Posterior vena cava (tissue), 2 donors: ENCODE measurements at regions of chr7 and their contacts with region 1.

Region 1: GRCh38 chr7:45136106-45137060 is 21.2 kb upstream of the RAMP3 start:
- DNase-seq: peak; percentile 78

Region 2: DNA sequence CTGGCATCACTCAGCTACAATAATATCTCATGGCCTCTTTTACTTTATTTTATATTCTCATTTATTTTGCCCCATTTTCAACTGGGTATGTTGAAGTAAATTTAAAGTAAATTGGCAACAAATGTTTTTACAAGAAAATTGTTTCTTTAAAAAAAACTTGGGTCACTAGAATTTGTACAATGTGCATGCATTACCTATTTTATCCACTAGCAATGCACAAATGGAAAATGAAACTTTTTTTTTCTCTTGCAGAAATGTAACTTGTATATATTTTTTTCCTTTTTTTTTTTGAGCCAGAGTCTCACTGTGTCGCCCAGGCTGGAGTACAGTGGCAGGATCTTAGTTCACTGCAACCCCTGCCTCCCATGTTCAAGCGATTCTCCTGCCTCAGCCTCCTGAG is 278.2 kb before region 1 on chr7:
- intact Hi-C with region 1: loop called in 1 of 2 experiments (anchors 10 kb)
- DNase-seq: no peak

Region 3: DNA sequence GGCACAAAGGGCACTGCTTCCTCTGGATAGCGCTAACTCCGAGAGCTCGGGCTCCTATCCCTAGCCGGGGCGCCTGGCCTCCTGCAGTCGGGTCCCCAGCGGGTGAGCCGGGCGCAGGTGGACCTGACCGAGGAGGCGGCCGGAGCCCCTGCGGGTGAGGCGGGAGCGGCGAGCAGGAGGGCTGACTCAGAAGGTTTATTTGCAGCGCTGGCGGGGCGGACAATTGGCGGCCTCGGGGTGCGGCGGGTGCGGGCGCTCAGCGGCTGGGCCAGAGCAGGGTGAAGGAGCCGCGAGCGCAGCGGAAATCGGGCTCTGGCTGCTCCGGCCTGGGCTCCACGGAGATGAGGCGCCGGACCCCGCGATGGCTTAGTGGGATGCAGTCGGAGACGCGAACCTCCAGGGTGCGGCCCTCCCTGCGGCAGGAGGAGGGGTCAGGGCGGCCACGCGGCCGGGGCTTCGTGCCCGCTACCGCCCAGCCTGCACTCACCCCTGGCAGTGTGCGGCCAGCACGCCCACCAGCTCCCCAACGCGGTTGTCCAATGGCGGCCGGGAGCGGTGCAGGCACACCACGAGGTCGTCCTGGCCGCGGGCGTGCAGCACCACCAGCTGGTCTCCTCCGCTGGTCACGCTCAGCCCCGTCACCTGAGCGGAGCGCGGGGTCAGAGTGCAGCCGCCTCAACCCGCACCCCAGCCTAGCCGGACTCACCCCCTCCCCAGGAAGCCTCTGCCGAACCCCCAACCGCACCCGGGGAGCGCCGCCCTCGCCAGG is 173.7 kb before region 1 on chr7:
- intact Hi-C with region 1: loop called in 1 of 2 experiments (anchors 10 kb)
- DNase-seq: peak; percentile 83

Region 4: DNA sequence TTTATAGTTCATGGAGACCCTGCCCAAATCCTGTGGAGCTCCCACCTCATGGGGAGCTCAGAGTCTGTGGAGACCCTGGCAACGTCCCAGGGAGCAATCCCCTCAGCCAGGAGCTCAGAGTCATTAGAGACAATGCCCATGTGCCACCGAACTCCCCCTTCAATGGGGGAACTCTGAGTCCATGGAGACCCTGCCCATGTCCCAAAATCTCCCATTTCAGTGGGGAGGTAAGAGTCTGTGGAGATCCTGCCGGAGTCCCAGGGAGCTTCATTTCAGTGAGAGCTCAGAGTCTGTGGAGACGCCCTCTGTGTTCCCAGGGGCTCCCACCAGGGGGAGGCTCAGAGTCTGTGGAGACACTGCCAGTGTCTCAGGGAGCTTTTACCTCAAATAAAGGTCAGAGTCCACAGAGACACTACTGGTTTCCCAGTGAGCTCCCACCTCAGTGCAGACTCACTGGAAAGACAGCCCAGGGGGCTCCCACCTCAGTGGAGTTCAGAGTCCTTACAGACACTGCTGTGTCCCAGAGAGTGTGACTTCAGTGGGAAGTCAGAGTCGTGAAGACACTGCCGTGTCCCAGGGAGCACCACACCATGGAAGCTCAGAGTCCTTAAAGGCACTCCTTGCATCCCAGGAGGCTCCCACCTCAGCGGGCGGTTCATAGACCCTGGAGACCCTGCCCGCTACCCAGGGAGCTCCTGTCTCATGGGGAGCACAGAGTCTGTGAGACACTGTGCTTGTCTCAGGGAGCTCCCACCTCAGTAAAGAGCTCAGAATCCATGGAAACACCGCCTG is 162.6 kb before region 1 on chr7:
- intact Hi-C with region 1: loop called (anchors 10 kb)
- DNase-seq: peak; percentile 88

Region 5: GRCh38 chr7:45718464-45719330 is 582.3 kb after region 1 on chr7:
- intact Hi-C with region 1: no loop called
- DNase-seq: peak; percentile 70